Activated CD4-positive, alpha-beta memory T cell treated with anti-CD3 and anti-CD28 coated beads for 36 hours (primary cell): ENCODE measurements at regions of chr14 and their contacts with region 1.

Region 1: DNA sequence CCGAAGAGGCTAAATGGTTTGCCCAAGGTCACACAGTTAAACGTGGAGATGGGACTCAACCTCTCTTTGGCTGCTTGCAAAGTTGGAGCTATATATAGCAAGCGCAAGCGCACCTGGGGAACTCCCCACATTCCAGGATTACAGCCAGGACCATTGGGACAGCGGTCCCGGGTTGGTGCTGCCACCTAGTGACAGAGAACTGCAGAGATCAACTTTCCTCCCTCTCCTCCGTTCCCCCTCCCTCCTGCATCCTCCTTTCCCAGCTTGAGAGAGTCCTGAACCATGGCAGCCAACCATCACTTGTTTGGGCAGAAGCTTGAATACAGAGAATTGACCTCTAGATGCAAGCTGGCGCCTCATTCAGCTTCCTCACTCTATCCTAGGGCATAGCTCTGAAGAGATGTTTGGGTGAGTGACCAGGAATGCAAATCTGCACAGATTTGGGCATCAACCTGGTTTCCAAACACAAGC is 17.4 kb upstream of the FLVCR2 start:
- DNase-seq: peak; percentile 68
- H3K4me3 Mint-ChIP-seq: no peak overlapping the region
- H3K27ac Mint-ChIP-seq: peak overlapping the region; percentile 97
- H3K4me1 Mint-ChIP-seq: peaks cover 86% of the 10 kb centered on the region
- H3K27me3 Mint-ChIP-seq: no peaks in the 10 kb centered on the region

Region 2: GRCh38 chr14:74762917-74763802 is 797.8 kb before region 1 on chr14 and contains the start of gene YLPM1:
- CTCF ChIA-PET with region 1: no interaction called
- POLR2A ChIA-PET with region 1: no interaction called
- intact Hi-C with region 1: loop called (anchors 10 kb)
- DNase-seq: peak; percentile 95
- H3K4me3 Mint-ChIP-seq: peak within 1 kb of the TSS; percentile 94
- H3K27ac Mint-ChIP-seq: peak within 1 kb of the TSS; percentile 91
- H3K4me1 Mint-ChIP-seq: peaks cover 44% of the 10 kb centered on the region
- H3K27me3 Mint-ChIP-seq: no peaks in the 10 kb centered on the region
- total RNA-seq, gene YLPM1: 46.3 to 51.8 TPM

Region 3: GRCh38 chr14:75094896-75095295 is 466.1 kb before region 1 on chr14:
- CTCF ChIA-PET with region 1: no interaction called
- POLR2A ChIA-PET with region 1: no interaction called
- intact Hi-C with region 1: no loop called
- DNase-seq: no peak
- H3K4me3 Mint-ChIP-seq: no peak overlapping the region
- H3K27ac Mint-ChIP-seq: no peak overlapping the region
- H3K4me1 Mint-ChIP-seq: no peaks in the 10 kb centered on the region
- H3K27me3 Mint-ChIP-seq: no peaks in the 10 kb centered on the region

Region 4: DNA sequence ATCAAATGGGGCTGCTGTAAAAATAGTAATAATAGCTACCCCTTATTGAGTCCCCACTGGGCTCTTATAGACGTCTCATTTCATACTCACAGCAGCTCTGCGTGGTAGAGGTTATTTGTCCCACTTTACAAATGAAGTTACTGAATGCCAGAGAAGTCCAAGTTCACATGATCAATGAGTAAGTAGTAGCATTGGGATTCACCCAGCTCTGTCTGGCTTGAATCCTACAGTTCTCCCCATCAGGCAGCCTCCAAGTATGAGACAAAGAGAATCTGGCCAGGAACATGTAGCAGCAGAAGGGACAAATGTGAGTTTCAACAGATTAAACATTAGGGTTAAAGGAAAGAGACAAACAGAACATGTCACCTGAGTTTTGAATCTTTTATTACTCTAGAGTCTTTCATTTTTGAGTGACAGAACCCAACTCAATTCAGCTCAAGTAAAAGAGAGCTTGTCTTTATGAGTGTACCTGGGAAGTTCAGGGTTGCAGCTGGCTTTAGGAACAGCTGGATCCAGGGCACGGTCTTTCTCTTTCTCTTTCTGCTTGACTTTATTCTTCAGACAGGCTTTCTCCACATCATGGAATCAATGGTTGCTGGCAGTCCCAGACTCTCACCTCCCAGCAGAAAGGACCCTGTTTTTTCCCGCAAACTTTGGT is 197.3 kb before region 1 on chr14:
- CTCF ChIA-PET with region 1: no interaction called
- POLR2A ChIA-PET with region 1: no interaction called
- intact Hi-C with region 1: no loop called
- DNase-seq: no peak
- H3K4me3 Mint-ChIP-seq: no peak overlapping the region
- H3K27ac Mint-ChIP-seq: no peak overlapping the region
- H3K4me1 Mint-ChIP-seq: peaks cover 14% of the 10 kb centered on the region
- H3K27me3 Mint-ChIP-seq: no peaks in the 10 kb centered on the region

Region 5: DNA sequence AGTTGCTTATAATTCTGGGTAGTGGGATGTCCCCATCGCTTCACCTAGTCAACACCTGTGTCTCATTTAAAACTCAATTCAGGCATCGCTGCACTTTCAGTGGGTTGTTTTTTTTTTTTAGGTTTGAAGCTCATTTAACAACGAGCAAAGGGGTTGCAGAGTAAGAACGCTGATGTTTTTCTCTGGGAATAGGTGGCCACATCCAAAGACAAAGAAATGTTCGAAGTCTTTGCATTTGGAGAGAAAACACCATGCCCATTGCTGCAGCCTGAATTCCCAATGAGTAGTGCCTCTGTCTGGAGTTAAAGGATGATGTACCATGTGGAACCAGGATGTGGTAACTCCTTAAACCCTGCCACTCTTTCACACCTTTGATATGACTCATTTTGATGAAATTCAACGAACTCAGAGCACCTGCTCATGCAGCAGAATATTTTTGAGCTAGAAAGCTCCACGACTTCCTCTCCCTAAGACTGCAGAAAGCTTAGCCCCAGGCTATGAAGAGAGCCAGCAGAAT is 73.8 kb before region 1 on chr14:
- CTCF ChIA-PET with region 1: interaction called, 19 read pairs
- POLR2A ChIA-PET with region 1: interaction called, 7 read pairs
- intact Hi-C with region 1: loop called (anchors 1 kb)
- DNase-seq: peak; percentile 25
- H3K4me3 Mint-ChIP-seq: no peak overlapping the region
- H3K27ac Mint-ChIP-seq: peak overlapping the region; percentile 62
- H3K4me1 Mint-ChIP-seq: peaks cover 22% of the 10 kb centered on the region
- H3K27me3 Mint-ChIP-seq: peaks cover 2% of the 10 kb centered on the region

Region 6: DNA sequence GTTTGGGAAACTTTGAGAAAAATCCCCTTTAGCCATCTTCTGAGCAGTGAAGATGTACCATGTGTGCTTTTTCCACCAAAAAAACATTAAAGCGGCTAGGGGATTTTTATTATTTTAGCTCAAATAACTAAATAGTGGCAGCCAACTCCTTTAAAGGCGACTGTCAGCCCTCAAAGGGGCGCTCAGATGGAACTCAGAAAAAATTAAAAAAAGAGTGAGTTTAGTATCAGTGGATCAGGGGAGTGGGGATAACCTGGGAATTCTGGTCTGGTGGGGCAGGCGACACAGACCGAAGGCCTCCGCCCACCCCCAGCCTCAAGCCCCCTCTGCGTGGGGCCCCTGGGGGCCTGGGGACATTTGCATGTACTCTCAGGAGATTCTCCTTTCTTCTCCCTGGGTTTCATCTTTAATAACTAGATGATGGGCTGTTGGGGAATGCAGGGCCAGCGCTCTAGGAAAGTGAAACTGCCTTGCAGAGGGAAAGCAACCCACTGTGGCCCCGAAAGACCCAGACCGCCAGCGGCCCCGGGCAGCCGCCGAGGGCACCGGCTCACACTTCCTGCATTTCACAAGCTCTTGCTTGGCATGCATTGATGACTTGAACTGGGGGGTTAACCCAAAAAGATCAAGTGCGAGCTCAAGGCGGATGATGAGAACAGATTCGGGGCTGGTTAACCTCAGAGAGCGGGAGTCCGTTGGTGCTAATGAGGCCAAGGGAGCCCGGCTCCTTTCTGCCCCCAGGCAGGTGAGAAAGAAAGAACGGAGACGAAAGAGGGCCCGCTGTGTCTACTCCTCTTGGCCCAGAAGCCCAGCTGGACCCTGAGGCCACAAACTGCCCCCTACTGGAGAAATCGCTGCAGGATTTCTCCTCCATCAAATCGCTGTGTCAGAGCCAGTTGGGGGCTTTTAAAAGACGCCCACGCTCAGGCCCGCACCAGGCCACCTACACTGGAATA is 46.0 kb before region 1 on chr14:
- CTCF ChIA-PET with region 1: interaction called, 83 read pairs
- POLR2A ChIA-PET with region 1: interaction called, 67 read pairs
- intact Hi-C with region 1: loop called (anchors 1 kb)
- DNase-seq: peak; percentile 77
- H3K4me3 Mint-ChIP-seq: peak overlapping the region; percentile 80
- H3K27ac Mint-ChIP-seq: peak overlapping the region; percentile 95
- H3K4me1 Mint-ChIP-seq: peaks cover 69% of the 10 kb centered on the region
- H3K27me3 Mint-ChIP-seq: no peaks in the 10 kb centered on the region

Region 7: GRCh38 chr14:75537071-75537470 is 23.9 kb before region 1 on chr14:
- CTCF ChIA-PET with region 1: interaction called, 91 read pairs
- POLR2A ChIA-PET with region 1: interaction called, 76 read pairs
- intact Hi-C with region 1: loop called (anchors 1 kb)
- DNase-seq: no peak
- H3K4me3 Mint-ChIP-seq: no peak overlapping the region
- H3K27ac Mint-ChIP-seq: peak overlapping the region; percentile 49
- H3K4me1 Mint-ChIP-seq: peaks cover 91% of the 10 kb centered on the region
- H3K27me3 Mint-ChIP-seq: no peaks in the 10 kb centered on the region

Region 8: DNA sequence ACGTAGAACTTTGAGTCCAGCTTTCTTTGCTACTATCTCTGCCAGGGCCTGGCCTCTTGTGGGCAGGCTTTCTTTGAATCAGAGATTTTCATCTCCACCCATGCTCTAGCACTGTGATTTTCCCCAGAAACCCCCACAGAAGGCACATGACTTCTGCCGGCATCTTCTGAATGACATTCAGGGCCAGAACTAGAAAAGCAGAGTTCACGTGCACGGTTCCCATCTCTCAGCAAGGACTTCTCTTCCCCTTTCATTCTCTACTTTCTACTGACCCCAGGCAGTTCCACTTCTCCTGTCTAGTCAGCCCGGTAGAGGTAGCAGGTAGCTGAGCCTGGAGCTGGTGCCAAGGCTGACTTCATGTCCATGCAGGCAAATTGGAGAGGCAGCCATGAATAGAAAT is 11.8 kb before region 1 on chr14:
- CTCF ChIA-PET with region 1: interaction called, 91 read pairs
- POLR2A ChIA-PET with region 1: interaction called, 76 read pairs
- intact Hi-C with region 1: loop called (anchors 1 kb)
- DNase-seq: peak; percentile 75
- H3K4me3 Mint-ChIP-seq: peak overlapping the region; percentile 13
- H3K27ac Mint-ChIP-seq: peak overlapping the region; percentile 94
- H3K4me1 Mint-ChIP-seq: peaks cover 81% of the 10 kb centered on the region
- H3K27me3 Mint-ChIP-seq: no peaks in the 10 kb centered on the region

Region 9: DNA sequence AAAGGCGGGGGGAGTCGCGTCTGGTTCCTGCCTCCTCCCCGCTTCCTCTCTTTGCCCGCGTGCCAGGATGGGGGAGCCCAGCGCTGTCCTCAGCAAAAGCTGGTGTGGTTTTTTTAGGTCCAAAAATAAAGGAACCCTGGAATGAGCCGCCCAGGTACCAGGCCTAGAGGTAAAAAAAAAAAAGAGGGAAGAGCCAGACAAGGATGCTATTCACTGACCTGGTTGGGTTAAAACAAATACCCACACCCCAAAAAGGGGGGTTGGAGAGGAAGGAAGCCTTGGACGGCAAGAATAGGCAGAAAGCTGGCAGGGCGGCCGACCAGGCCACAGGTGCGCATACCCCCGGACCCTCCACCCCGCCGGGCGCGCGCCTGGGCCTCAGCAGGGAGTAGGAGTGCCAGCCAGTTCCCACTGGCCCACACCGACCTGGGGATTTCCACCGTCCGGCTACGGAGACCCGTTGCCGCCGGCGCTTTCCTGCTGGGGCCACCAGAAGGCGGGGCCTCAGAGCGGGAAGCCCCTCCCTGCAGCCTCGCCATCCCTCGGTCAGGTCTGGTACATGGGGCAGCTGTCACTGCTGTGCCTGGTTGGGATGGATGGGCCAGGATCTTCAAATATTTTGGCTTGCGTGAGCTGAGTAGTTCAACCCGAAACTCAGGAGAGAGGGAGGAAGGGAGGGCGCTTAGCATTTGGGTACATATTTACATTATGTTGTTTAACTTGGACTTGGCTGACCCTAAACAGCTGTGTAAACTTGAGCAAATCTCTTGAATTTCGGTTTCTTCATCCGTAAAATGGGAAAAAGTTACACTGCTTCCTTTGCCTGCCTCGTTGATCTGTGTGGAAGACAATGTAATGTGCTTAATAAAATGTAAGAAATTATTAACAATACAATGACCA is 1472.9 kb after region 1 on chr14:
- CTCF ChIA-PET with region 1: no interaction called
- POLR2A ChIA-PET with region 1: no interaction called
- intact Hi-C with region 1: loop called (anchors 10 kb)
- DNase-seq: peak; percentile 95
- H3K4me3 Mint-ChIP-seq: peak overlapping the region; percentile 94
- H3K27ac Mint-ChIP-seq: peak overlapping the region; percentile 98
- H3K4me1 Mint-ChIP-seq: peaks cover 72% of the 10 kb centered on the region
- H3K27me3 Mint-ChIP-seq: no peaks in the 10 kb centered on the region